HEK293 (cell line): ENCODE measurements at regions of chr18 and their contacts with region 1.

Region 1: GRCh38 chr18:80171054-80171872 is 62.2 kb downstream of the ADNP2 start:
- H3K4me3 ChIP-seq: no peak overlapping the region
- H3K27ac ChIP-seq: no peak overlapping the region
- H3K4me1 ChIP-seq: no peaks in the 10 kb centered on the region
- CTCF ChIP-seq: peak; percentile 64

Region 2: GRCh38 chr18:80238651-80239260 is 67.5 kb after region 1 on chr18:
- CTCF ChIA-PET with region 1: interaction called, 12 read pairs
- POLR2A ChIA-PET with region 1: no interaction called
- H3K4me3 ChIP-seq: no peak overlapping the region
- H3K27ac ChIP-seq: no peak overlapping the region
- H3K4me1 ChIP-seq: no peaks in the 10 kb centered on the region
- CTCF ChIP-seq: no peak

Region 3: GRCh38 chr18:80253871-80254492 is 82.7 kb after region 1 on chr18:
- CTCF ChIA-PET with region 1: interaction called, 11 read pairs
- POLR2A ChIA-PET with region 1: no interaction called
- H3K4me3 ChIP-seq: no peak overlapping the region
- H3K27ac ChIP-seq: no peak overlapping the region
- H3K4me1 ChIP-seq: 0 out of 2 replicates have a peak, but pooled peaks cover 4% of the 10 kb centered on the region
- CTCF ChIP-seq: no peak